Naive thymus-derived CD8-positive, alpha-beta T cell (primary cell): ENCODE measurements at regions of chr4 and their contacts with region 1.

Region 1: DNA sequence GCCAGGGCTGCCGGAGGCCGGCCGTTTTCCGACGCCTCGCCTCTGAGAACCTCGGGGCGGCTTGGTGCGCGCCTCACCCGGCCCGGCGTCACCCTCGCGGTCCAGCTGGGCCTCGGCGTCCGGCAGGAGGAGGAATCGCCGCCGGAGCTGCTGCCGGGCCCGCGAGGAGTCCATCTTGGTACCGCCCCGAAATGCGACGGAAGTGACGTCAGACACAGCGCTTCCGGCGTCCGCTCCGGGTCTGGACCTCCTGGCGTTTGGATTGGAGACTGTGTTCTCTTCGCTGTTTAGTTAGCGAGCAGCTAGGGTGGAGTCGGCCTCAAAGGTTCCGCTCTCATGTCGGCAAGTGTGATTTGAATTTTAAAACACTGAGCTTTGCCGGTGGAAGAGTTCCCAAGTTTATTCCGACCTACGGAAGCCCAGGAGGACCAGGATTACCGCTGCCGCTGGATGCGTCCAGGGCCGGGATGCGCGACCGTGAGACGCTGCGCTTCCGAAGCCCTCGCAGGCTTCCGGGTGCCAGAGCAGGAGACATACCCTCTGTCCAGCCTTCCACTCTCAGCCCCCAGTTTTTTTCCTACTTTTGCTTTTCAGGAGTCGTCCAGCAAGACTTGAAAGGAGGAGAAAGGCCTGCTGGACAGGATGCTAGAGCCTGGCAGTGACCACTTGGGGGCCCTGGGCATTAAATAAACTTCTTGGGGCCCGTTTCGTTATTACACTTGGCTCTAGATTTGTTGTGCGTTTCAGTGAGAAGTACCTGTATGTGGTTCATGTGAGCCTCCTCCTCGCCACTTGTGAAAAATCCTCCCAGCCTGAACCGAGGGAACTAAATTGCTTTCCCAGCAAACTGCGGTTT is at the start of gene TMEM128:
- DNase-seq: peak; percentile 83 to 95 (median 92)
- ATAC-seq: peak; percentile 96 to 97
- H3K4me3 Mint-ChIP-seq: peak within 1 kb of the TSS; percentile 90 to 98 (median 96)
- H3K27ac Mint-ChIP-seq: peak within 1 kb of the TSS; percentile 97 to 99 (median 99)
- H3K4me1 Mint-ChIP-seq: peaks cover 29 to 41% (median 38%) of the 10 kb centered on the region in 4 donors
- H3K27me3 Mint-ChIP-seq: no peaks in the 10 kb centered on the region
- polyA plus RNA-seq, gene TMEM128: 35.2 to 43.0 (median 38.4) TPM

Region 2: DNA sequence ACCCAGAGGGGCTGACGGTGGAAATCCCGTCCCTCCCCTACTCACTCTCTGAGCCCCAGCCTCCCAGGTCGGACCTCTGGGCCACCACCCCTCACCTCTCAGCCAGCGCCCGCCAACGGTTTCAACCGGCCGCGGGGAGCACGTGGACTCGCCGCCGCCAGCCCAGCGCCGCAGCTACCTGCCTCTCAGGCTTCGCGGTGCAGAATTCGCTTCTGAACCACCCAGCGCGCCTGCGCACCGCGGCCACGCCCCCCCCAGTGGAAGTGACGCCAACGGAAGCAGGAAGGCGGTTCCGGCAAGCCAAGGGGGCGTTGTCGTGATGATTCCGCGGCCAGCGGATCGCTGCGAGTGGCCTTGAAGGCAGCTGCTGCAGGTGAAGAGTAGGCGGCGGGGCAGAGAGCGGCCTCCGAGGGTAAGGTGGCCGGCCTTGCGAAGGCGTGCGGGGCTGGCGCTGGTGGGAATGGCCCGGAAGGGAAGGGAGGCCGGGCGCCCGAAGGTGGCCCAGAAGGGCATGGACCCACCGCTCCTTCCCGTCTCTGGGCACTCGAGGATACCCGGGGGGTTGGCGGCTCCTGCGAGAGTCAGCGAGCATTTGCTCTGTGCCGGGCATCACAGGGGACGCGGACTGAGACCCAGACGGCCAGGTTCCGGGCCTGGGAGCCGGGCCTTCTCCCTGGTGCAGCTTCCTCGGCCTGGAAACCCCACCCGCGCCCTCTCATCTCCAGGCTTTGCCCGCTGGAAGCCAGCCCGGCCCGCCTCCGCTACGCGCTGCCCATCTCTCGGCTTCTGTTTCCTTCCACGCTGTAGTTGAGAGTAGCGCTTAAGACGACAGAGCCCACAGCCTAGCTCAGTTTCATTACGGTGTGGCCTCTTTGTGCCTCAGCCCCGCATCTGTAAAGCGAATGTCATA is 41.9 kb after region 1 on chr4 and contains the starts of genes LYAR and ZBTB49:
- POLR2A ChIA-PET with region 1: interaction called, 11 read pairs
- DNase-seq: peak; percentile 94 to 98 (median 97)
- ATAC-seq: peak; percentile 92 to 93
- H3K4me3 Mint-ChIP-seq: peak within 1 kb of the TSS; percentile 94 to 99 (median 97)
- H3K27ac Mint-ChIP-seq: peak within 1 kb of the TSS; percentile 80 to 97 (median 94)
- H3K4me1 Mint-ChIP-seq: peaks cover 33 to 73% (median 65%) of the 10 kb centered on the region in 4 donors
- H3K27me3 Mint-ChIP-seq: no peaks in the 10 kb centered on the region
- polyA plus RNA-seq, gene LYAR: 32.2 to 65.8 (median 35.6) TPM
- polyA plus RNA-seq, gene ZBTB49: 3.2 to 4.5 (median 3.9) TPM

Region 3: DNA sequence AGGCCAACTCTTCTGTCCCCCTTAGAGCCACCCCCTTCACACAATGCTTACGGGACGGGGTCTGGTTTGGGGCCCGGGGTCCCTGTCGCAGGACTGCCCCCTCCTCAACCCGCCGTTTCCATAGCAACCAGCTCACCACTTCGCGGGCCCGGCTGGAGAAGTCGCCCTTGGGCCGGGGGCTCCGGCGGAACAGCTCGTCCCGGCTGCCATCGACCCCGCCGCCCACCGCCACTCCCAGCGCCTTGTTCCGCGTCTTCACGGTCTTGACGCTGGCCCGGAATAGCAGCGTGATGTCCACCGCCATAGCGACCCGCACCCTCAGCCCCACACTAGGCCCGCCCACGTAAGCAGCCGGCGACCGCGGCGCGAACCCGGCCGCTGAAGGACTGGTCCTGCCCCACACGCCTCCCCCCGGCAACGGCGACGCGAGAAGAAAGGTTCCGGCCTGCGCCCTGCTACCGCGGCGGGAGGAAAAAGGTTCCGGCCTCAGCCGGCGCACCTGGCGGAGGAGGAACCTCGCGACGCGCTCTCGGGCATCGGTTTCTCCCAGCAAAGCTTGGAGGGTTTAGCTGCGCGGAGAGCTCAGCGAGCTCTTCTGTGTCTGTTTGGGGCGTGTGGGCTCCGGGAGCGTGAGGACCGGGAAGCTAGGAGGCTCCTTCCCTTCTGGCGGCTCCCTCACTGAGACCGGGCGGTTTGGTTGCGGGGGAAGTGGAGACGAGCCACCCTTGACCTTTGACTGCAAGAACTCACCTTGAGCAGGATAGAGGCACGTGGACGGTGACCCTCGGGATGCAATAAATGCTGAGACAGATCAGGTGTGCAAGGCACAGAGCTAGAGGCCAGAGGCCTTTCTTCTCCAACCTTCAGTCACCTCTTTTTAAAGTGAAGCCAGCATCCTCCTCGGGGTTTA is 293.7 kb after region 1 on chr4 and contains the start of gene STX18:
- POLR2A ChIA-PET with region 1: interaction called, 11 read pairs
- DNase-seq: peak; percentile 70 to 89 (median 85)
- ATAC-seq: peak; percentile 92
- H3K4me3 Mint-ChIP-seq: peak within 1 kb of the TSS; percentile 94 to 99 (median 98)
- H3K27ac Mint-ChIP-seq: peak within 1 kb of the TSS; percentile 92 to 99 (median 96)
- H3K4me1 Mint-ChIP-seq: peaks cover 29 to 59% (median 55%) of the 10 kb centered on the region in 4 donors
- H3K27me3 Mint-ChIP-seq: no peaks in the 10 kb centered on the region
- polyA plus RNA-seq, gene STX18: 20.0 to 21.5 (median 20.2) TPM